ENCODE measurements at regions of chr14 and their contacts with region 1.

Region 1: GRCh38 chr14:68788996-68789820 is 3.7 kb downstream of the ZFP36L1 start:
- DNase-seq: peak; percentile 79
- H3K4me3 ChIP-seq: peak overlapping the region; percentile 96
- H3K27ac ChIP-seq: peak overlapping the region; percentile 21
- H3K4me1 ChIP-seq: peaks cover 43% of the 10 kb centered on the region
- H3K27me3 ChIP-seq: no peaks in the 10 kb centered on the region
- CTCF ChIP-seq: peak; percentile 71 to 82
- POLR2A ChIP-seq: peak; percentile 14

Region 2: DNA sequence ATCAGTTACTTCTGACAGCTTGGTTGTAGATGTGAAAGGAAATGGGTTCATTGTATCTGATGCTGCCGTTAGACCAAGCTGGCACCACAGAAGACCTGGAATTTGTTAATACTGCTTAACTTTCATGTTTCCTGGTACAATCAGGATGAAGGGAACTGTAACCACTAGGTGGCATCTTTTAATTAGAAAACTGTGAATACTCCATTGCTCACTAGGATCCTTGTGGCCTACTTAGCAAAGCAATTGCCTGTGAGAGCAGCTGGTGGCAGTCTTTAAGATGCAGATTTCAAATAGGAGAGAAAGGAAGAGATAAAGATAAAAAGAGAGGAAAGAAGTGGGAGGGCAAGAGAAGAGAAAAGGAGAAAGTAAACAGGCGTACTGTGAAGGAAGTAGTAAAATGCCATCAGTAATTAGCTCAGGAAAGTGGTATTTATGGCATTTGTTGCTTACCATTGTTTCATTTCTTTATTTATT is 855.2 kb before region 1 on chr14:
- CTCF ChIA-PET with region 1: interaction called, 7 read pairs
- POLR2A ChIA-PET with region 1: interaction called, 6 read pairs
- dilution Hi-C with region 1: no loop called
- intact Hi-C with region 1: loop called (anchors 2 kb)
- DNase-seq: peak; percentile 89
- H3K4me3 ChIP-seq: no peak overlapping the region
- H3K27ac ChIP-seq: peak overlapping the region; percentile 27
- H3K4me1 ChIP-seq: peaks cover 11% of the 10 kb centered on the region
- H3K27me3 ChIP-seq: no peaks in the 10 kb centered on the region
- CTCF ChIP-seq: peak; percentile 46 to 57
- POLR2A ChIP-seq: no peak

Region 3: GRCh38 chr14:68458840-68459469 is 330.3 kb before region 1 on chr14:
- CTCF ChIA-PET with region 1: interaction called, 12 read pairs
- POLR2A ChIA-PET with region 1: interaction called, 17 read pairs
- dilution Hi-C with region 1: no loop called
- intact Hi-C with region 1: loop called (anchors 1 kb)
- DNase-seq: peak; percentile 98
- H3K4me3 ChIP-seq: no peak overlapping the region
- H3K27ac ChIP-seq: peak overlapping the region; percentile 85
- H3K4me1 ChIP-seq: peaks cover 30% of the 10 kb centered on the region
- H3K27me3 ChIP-seq: no peaks in the 10 kb centered on the region
- CTCF ChIP-seq: no peak
- POLR2A ChIP-seq: peak; percentile 23

Region 4: DNA sequence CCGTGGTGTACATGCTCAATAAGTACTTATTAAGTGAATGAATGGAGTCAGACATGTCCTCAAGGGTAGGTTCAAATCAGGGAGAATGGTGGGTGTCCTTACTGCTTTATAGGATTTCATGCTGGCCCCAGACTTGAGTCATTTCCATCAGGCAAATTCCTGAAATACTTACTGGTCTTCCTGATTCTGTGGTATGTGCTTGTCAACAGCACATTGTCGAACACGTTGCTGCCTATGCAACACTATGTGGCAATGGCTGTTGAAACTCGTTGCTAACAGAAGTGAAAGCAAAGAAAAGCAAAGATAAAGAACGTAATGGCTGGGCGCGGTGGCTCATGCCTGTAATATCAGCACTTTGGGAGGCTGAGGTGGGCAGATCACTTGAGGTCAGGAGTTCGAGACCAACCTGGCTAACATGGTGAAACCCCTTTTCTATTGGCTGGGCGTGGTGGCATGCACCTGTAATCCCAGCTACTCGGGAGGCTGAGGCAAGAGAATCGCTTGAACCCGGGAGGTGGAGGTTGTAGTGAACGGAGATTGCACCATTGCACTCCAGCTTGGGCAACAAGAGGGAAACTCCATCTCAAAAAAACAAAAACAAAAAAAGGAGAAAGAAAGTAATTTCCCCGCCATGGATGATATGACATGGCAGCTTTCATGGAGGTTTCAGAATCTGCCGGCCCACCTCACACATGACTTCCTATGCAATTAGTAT is 211.2 kb before region 1 on chr14:
- CTCF ChIA-PET with region 1: interaction called, 3 read pairs
- POLR2A ChIA-PET with region 1: interaction called, 8 read pairs
- dilution Hi-C with region 1: no loop called
- intact Hi-C with region 1: loop called (anchors 1 kb)
- DNase-seq: peak; percentile 94
- H3K4me3 ChIP-seq: no peak overlapping the region
- H3K27ac ChIP-seq: peak overlapping the region; percentile 77
- H3K4me1 ChIP-seq: peaks cover 40% of the 10 kb centered on the region
- H3K27me3 ChIP-seq: no peaks in the 10 kb centered on the region
- CTCF ChIP-seq: no peak
- POLR2A ChIP-seq: peak; percentile 77

Region 5: DNA sequence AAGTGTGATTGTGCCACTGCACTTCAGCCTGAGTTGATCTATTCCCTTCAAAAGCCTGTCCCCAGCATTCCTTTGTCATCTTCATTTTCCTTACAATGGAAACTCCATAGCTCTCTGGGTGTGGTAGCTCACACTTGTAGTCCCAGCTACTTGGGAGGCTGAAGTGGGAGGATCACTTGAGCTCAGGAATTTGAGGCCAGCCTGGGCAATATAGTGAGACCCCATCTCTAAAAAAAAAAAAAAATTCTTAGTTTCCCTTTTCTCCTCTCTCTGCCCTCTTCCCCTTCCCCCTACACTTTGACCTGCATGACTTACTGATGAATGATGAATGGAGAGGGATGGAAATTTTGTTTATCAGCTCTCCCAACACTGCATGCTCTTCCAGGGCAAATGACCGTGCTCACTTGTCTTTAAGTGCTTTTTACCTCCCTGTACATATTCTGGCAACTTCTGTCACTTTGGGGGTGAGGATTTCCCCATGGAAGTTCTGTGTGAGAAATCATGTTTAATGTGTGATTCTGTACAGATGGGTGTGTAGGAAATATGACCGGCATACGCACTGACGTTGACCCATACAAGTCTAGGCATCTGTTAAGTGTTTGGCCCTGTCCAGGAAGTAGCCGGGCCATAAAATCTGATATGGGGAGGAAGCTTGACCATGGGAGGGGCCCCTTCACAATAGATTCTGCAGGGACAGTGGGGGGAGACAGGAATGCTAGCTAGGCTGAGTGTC is 61.7 kb before region 1 on chr14:
- CTCF ChIA-PET with region 1: no interaction called
- POLR2A ChIA-PET with region 1: interaction called, 3 read pairs
- dilution Hi-C with region 1: no loop called
- intact Hi-C with region 1: loop called (anchors 2 kb)
- DNase-seq: peak; percentile 62
- H3K4me3 ChIP-seq: no peak overlapping the region
- H3K27ac ChIP-seq: no peak overlapping the region
- H3K4me1 ChIP-seq: peaks cover 17% of the 10 kb centered on the region
- H3K27me3 ChIP-seq: no peaks in the 10 kb centered on the region
- CTCF ChIP-seq: no peak
- POLR2A ChIP-seq: no peak

Region 6: GRCh38 chr14:69281450-69282169 is 492.4 kb after region 1 on chr14:
- CTCF ChIA-PET with region 1: no interaction called
- POLR2A ChIA-PET with region 1: no interaction called
- dilution Hi-C with region 1: no loop called
- intact Hi-C with region 1: no loop called
- DNase-seq: no peak
- H3K4me3 ChIP-seq: no peak overlapping the region
- H3K27ac ChIP-seq: no peak overlapping the region
- H3K4me1 ChIP-seq: no peaks in the 10 kb centered on the region
- H3K27me3 ChIP-seq: peaks cover 3 to 6% of the 10 kb centered on the region in 2 experiments
- CTCF ChIP-seq: no peak
- POLR2A ChIP-seq: no peak

Measured in endothelial cell of umbilical vein (primary cell).